Activated naive CD4-positive, alpha-beta T cell treated with anti-CD3 and anti-CD28 coated beads for 36 hours (primary cell): ENCODE measurements at regions of chr2 and their contacts with region 1.

Region 1: DNA sequence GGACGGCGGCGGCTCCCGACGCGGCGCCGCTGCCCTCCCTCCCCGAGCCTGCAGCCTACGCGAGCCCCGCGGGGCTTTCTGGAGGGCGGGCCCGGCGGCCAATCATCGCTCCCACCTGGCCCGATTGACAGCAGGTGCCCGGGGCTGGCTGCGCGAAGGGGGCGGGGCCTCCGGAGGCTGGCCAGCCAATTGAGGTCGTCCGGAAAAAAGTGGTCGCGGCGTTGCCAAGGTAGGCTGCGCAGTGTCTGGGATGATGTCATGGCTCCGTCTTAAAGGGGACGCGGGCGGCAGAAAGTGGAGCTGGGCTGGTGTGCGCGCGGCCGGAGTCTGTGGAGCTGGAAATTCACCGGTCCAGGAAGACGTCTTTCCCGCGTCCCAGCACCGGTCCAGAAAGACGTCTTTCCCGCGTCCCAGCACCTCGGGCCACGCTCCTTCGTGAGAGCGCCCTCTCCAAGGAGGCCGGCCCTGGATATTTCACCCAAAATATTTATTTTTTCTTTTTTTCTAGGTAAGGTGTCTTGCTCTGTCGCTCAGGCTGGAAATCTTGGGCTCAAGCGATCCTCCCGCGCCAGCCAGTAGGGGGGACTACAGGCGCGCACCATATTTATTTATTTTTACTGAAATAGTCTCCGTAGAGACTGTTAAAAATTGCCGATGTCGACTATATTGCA is at the start of gene ACTR1B:
- DNase-seq: peak; percentile 98
- H3K4me3 Mint-ChIP-seq: peak within 1 kb of the TSS; percentile 93
- H3K27ac Mint-ChIP-seq: peak within 1 kb of the TSS; percentile 98
- H3K4me1 Mint-ChIP-seq: peaks cover 31% of the 10 kb centered on the region
- H3K27me3 Mint-ChIP-seq: no peaks in the 10 kb centered on the region
- total RNA-seq, gene ACTR1B: 103 to 104 TPM

Region 2: GRCh38 chr2:96536445-96537065 is 1127.5 kb before region 1 on chr2 and contains the start of gene ARID5A:
- CTCF ChIA-PET with region 1: no interaction called
- intact Hi-C with region 1: loop called (anchors 5 kb)
- DNase-seq: peak; percentile 96
- H3K4me3 Mint-ChIP-seq: peak within 1 kb of the TSS; percentile 96
- H3K27ac Mint-ChIP-seq: peak within 1 kb of the TSS; percentile 99
- H3K4me1 Mint-ChIP-seq: peaks cover 60% of the 10 kb centered on the region
- H3K27me3 Mint-ChIP-seq: no peaks in the 10 kb centered on the region
- total RNA-seq, gene ARID5A: 349 to 351 TPM

Region 3: DNA sequence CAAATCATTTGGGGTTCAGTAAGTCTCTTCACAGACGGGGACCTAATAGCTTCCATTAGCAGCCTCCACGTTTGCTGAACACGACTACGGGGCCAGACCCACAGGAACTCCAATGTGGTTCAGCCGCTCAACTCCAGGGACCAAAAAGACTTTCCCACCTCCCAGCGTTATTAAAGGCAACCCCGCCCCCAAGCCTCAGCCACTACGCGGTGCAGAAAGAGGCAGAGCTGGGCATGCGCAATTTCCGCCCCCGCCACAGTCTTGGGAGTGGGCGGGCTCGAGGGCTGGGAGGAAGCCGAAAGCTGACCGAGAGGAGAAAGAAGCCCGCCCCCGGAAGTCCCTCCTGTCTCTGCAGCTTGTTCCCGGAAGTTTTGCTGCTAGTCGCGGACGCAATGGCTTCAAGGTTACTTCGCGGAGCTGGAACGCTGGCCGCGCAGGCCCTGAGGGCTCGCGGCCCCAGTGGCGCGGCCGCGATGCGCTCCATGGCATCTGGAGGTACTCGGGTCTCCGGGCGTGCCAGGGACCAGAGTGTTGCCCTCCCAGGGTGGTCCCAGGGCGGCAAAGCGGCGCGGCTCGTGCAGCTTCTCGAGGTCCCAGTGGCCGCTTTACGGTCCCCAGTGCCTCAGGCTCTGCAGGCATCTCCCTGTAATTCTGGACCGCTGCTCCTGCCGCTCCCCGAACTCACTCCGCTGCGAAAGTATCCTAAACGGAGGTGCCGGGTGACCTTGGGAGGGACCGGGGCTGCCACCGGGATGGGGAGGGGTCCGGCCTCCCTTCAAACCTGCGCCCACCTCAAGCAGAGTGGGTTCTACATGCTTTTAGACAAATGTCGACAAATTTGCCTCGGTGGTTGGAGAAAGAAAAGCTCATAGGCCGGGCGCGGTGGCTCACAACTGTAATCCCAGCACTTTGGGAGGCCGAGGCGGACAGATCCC is 18.1 kb before region 1 on chr2 and contains the start of gene COX5B:
- CTCF ChIA-PET with region 1: interaction called, 23 read pairs
- intact Hi-C with region 1: loop called (anchors 1 kb)
- DNase-seq: peak; percentile 99
- H3K4me3 Mint-ChIP-seq: peak within 1 kb of the TSS; percentile 94
- H3K27ac Mint-ChIP-seq: peak within 1 kb of the TSS; percentile 96
- H3K4me1 Mint-ChIP-seq: peaks cover 21% of the 10 kb centered on the region
- H3K27me3 Mint-ChIP-seq: no peaks in the 10 kb centered on the region
- total RNA-seq, gene COX5B: 245 to 267 TPM

Region 4: DNA sequence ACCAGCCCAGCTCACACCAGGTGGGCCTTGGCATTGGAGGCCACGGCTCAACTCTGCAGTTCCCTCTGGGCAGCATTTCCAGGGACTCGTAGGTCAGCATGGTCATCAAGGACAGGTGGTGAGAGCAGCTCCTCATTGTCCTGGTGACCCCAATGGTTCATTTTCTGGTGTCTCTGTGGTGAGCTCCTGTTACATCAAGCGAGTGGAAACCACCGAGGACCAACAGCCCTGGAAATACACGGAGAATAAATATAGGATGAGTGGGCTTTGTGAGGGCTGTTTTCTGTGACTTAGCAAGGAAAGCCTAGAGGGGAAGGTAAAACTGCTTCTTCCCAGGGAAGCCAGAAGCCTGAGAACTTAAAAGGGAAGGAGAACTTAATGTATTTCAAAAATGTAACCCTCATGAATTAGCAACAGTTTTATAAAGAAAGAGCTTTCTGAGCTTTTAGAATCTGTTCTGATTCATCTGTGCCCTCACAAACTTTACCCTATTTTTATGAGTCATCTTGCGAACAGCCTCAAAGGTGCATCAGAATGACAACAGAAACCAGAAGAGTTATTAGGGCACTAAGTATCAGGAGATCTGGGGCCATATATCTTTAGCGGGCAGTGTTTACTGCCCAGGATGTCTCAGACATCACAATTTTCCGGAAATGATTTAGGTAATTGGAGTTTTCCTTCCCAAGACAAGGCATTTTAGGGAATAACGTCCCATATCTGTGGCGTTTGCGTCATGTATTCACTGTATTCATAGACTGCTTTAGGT is 24.1 kb after region 1 on chr2:
- CTCF ChIA-PET with region 1: interaction called, 4 read pairs
- intact Hi-C with region 1: loop called (anchors 1 kb)
- DNase-seq: no peak
- H3K4me3 Mint-ChIP-seq: no peak overlapping the region
- H3K27ac Mint-ChIP-seq: peak overlapping the region; percentile 64
- H3K4me1 Mint-ChIP-seq: peaks cover 15% of the 10 kb centered on the region
- H3K27me3 Mint-ChIP-seq: no peaks in the 10 kb centered on the region

Region 5: GRCh38 chr2:97718051-97718882 is 54.2 kb after region 1 on chr2:
- CTCF ChIA-PET with region 1: interaction called, 3 read pairs
- intact Hi-C with region 1: loop called (anchors 1 kb)
- DNase-seq: peak; percentile 84
- H3K4me3 Mint-ChIP-seq: peak overlapping the region; percentile 85
- H3K27ac Mint-ChIP-seq: peak overlapping the region; percentile 95
- H3K4me1 Mint-ChIP-seq: peaks cover 71% of the 10 kb centered on the region
- H3K27me3 Mint-ChIP-seq: no peaks in the 10 kb centered on the region

Region 6: DNA sequence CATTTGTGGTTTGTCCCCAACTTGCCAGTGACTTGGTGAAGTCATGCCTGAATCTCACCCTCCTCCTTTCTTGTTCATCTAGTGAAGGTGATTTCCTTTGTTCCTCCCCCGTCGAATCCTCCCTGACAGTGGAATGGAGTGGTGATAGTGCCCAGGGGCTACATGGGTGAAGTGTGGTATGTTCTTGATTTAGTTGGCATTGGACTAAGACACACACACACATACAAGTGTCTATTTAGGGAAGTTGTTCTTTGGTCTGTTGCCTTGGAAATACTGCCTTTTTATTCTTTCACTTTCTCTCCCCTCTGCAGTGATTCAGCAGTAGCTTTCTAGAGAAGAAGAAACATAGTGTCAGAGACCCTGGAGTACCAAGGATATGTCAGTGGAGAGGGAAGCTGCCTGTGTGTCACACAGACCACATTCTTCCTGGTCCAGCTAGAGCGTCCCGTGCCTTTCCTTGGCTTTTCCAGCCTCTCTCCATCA is 791.4 kb after region 1 on chr2:
- CTCF ChIA-PET with region 1: no interaction called
- intact Hi-C with region 1: loop called (anchors 5 kb)
- DNase-seq: peak; percentile 66
- H3K4me3 Mint-ChIP-seq: peak overlapping the region; percentile 59
- H3K27ac Mint-ChIP-seq: peak overlapping the region; percentile 89
- H3K4me1 Mint-ChIP-seq: peaks cover 98% of the 10 kb centered on the region
- H3K27me3 Mint-ChIP-seq: no peaks in the 10 kb centered on the region

Region 7: DNA sequence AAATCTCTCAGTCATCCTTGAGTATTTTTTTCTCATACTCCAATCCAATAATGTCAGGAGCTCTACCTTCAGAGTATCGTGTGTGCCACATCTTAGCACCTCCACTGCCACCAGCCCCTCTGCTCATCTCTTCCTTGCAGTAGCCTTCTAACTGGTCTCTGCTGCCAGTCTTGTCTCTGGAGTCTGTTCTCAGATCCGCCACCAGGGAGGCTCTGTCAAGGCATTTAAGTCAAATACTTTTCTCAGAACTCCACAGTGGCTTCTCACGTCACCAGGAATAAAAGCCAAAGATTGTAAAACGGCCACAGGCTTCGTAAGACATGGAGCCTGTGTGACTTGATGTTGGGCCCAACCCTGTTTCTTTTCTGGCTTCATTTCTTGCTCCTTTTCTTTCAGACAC is 951.4 kb after region 1 on chr2:
- CTCF ChIA-PET with region 1: no interaction called
- intact Hi-C with region 1: no loop called
- DNase-seq: no peak
- H3K4me3 Mint-ChIP-seq: no peak overlapping the region
- H3K27ac Mint-ChIP-seq: peak overlapping the region; percentile 64
- H3K4me1 Mint-ChIP-seq: peaks cover 47% of the 10 kb centered on the region
- H3K27me3 Mint-ChIP-seq: no peaks in the 10 kb centered on the region